Tibial artery (tissue), 4 donors: ENCODE measurements at regions of chr22 and their contacts with region 1.

Region 1: GRCh38 chr22:36123673-36124630 is 36.6 kb downstream of the APOL3 start:
- DNase-seq: peak; percentile 93 to 96
- H3K4me3 ChIP-seq: peak overlapping the region; percentile 35 to 51
- H3K27ac ChIP-seq: peak overlapping the region; percentile 77 to 79
- H3K4me1 ChIP-seq: peaks cover 0 to 10% (median 5%) of the 10 kb centered on the region in 4 donors
- H3K27me3 ChIP-seq: peaks cover 0 to 6% of the 10 kb centered on the region in 2 donors
- CTCF ChIP-seq: peak; percentile 96 to 99

Region 2: GRCh38 chr22:35430897-35431322 is 693.0 kb before region 1 on chr22:
- intact Hi-C with region 1: loop called (anchors 5 kb)
- DNase-seq: peak; percentile 80 to 91
- H3K4me3 ChIP-seq: no peak overlapping the region
- H3K27ac ChIP-seq: no peak overlapping the region
- H3K4me1 ChIP-seq: peaks cover 0 to 6% (median 2%) of the 10 kb centered on the region in 4 donors
- H3K27me3 ChIP-seq: no peaks in the 10 kb centered on the region
- CTCF ChIP-seq: peak; percentile 98 to 99

Region 3: GRCh38 chr22:35627264-35628041 is 496.5 kb before region 1 on chr22:
- intact Hi-C with region 1: loop called (anchors 5 kb)
- DNase-seq: peak; percentile 87 to 91
- H3K4me3 ChIP-seq: peak overlapping the region; percentile 56 to 73
- H3K27ac ChIP-seq: peak overlapping the region; percentile 82 to 88
- H3K4me1 ChIP-seq: peaks cover 0 to 38% (median 25%) of the 10 kb centered on the region in 4 donors
- H3K27me3 ChIP-seq: no peaks in the 10 kb centered on the region
- CTCF ChIP-seq: peak; percentile 42 to 60

Region 4: DNA sequence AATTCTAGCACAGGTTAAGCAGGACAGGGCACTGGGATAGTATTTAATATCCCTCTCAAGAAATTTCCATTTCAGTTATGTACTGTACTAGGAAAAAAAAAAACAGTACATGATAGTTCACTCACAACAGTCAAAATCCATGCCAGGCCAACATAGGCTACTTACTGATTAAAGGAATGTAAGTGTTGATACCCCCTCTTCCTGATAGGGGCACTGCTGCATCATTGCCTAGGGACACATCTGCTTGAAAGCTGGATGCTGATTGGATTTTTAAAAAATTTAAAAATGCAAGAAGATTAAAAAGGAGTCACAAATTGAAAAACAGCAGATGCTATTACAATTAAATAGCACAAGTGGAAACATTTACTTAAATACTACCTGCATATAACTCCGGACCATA is 362.9 kb before region 1 on chr22:
- intact Hi-C with region 1: loop called (anchors 10 kb)
- DNase-seq: no peak
- H3K4me3 ChIP-seq: no peak overlapping the region
- H3K27ac ChIP-seq: no peak overlapping the region
- H3K4me1 ChIP-seq: no peaks in the 10 kb centered on the region
- H3K27me3 ChIP-seq: no peaks in the 10 kb centered on the region
- CTCF ChIP-seq: peak in 1 of 2 experiments; percentile 34

Region 5: DNA sequence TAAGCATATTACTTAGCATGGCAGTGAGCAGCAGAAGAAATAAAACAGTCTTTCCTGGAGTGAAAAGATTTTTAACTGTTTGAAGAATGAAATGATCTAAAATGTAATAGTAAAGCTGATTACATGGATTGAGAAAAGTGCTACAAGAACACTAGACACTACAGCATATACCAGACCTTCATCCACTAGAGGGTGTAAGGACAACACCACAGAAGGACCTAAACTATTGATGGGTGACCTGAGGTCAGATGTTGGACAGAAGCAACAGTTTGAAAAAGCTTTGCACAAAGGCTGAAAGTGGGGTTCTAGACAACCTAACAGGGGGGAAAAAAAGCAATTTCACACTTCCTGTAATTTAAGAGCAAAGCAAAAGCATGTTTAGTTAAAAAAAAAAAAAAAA is 193.0 kb before region 1 on chr22:
- intact Hi-C with region 1: loop called (anchors 5 kb)
- DNase-seq: no peak
- H3K4me3 ChIP-seq: no peak overlapping the region
- H3K27ac ChIP-seq: no peak overlapping the region
- H3K4me1 ChIP-seq: peaks cover 0 to 8% (median 0%) of the 10 kb centered on the region in 4 donors
- H3K27me3 ChIP-seq: no peaks in the 10 kb centered on the region
- CTCF ChIP-seq: peak; percentile 60 to 75

Region 6: DNA sequence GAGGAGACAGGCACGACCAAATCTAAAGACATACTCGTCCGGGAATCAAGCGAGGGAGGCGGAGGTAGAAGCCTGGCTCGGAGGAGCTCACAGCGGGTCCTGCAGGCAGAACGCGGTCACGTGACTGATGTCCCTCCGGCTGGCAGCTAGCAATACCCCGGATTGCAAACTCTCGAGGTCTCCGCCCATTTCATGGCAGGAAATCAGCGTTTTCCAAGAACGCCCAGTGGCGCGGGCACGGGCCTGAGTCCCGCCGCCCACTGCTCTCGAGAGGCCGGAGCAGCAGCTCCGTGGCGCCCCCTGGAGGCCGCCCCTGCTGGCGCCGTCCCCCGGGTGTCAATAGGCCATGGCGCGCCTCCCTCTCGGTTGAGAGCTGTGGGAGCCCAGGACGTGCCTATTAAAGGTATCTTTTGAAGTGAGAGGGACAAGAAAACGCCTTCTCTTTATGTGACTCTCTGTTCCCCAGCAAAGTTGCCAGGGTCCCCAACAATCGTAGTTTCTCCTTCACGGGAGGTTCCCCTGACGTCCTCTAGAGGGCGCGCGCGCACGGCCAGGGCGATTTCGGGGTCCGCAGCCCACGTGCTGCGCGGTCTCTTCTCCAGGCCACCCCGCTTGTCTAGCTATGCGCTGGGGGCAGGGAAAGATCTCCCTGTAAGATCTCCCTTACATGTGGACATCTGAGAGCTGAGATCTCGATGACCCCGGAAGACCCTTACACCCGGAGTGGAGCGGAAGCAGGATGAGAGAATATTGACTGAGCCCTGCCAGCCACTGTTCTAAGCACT is 58.0 kb before region 1 on chr22:
- intact Hi-C with region 1: loop called (anchors 5 kb)
- DNase-seq: peak; percentile 89 to 97
- H3K4me3 ChIP-seq: peak overlapping the region; percentile 50 to 56
- H3K27ac ChIP-seq: peak overlapping the region; percentile 79 to 85
- H3K4me1 ChIP-seq: peaks cover 0 to 5% (median 3%) of the 10 kb centered on the region in 4 donors
- H3K27me3 ChIP-seq: no peaks in the 10 kb centered on the region
- CTCF ChIP-seq: peak; percentile 99 to 100

Region 7: GRCh38 chr22:36180038-36180880 is 56.3 kb after region 1 on chr22:
- intact Hi-C with region 1: no loop called
- DNase-seq: peak; percentile 89 to 91
- H3K4me3 ChIP-seq: no peak overlapping the region
- H3K27ac ChIP-seq: no peak overlapping the region
- H3K4me1 ChIP-seq: peaks cover 0 to 3% (median 0%) of the 10 kb centered on the region in 4 donors
- H3K27me3 ChIP-seq: no peaks in the 10 kb centered on the region
- CTCF ChIP-seq: peak; percentile 89 to 94